Activated naive CD4-positive, alpha-beta T cell treated with anti-CD3 and anti-CD28 coated beads for 36 hours (primary cell): ENCODE measurements at regions of chr1 and their contacts with region 1.

Region 1: DNA sequence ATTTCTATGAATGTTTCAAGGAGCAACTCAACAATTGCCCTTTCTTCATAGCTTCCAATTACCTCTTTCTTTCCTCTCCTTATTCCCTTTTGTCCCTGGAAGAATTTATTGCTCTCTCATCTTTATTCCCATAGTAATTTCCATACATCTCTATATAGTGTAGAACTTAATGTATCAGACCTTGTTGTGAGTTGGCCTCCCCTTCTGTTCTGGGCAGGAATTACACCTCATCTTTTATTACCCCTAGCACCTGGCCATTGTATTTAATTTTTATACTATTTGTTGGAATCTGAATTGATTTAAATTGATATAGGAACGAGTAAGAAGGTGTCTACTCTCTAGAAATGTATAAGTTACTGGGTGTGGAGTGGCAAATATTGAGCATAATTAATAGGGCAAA is 114.5 kb downstream of the CACHD1 start:
- DNase-seq: no peak
- H3K4me3 Mint-ChIP-seq: no peak overlapping the region
- H3K27ac Mint-ChIP-seq: no peak overlapping the region
- H3K4me1 Mint-ChIP-seq: peaks cover 12% of the 10 kb centered on the region
- H3K27me3 Mint-ChIP-seq: no peaks in the 10 kb centered on the region

Region 2: DNA sequence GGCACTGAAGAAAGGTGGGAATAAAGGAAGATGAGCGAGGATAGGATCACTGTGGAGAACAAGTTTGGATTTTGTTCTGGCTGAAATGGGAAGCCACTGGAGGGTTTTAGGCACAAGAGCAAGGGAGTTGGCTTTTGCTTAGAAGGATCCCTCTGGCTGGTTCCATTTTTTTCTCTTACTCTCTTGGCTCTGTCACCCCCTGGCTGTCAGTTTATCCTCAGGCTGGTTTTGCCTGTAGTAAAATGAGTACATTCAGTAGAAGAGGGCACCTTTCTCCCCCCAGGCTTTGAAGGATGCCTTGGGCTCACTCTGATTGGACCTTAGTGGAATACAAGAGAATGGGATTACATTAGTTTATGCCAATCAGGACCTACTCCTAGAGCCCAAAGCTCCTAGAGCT is 97.4 kb before region 1 on chr1:
- CTCF ChIA-PET with region 1: interaction called, 3 read pairs
- intact Hi-C with region 1: loop called (anchors 1 kb)
- DNase-seq: peak; percentile 21
- H3K4me3 Mint-ChIP-seq: no peak overlapping the region
- H3K27ac Mint-ChIP-seq: no peak overlapping the region
- H3K4me1 Mint-ChIP-seq: peaks cover 28% of the 10 kb centered on the region
- H3K27me3 Mint-ChIP-seq: peaks cover 2% of the 10 kb centered on the region